ENCODE measurements at regions of chr7 and their contacts with region 1.

Region 1: GRCh38 chr7:3712841-3713240 is 411.8 kb downstream of the SDK1 start:
- DNase-seq: no peak
- ATAC-seq: no peak
- H3K4me3 ChIP-seq: no peak overlapping the region
- H3K4me3 Mint-ChIP-seq: no peak overlapping the region
- H3K27ac ChIP-seq: no peak overlapping the region
- H3K27ac Mint-ChIP-seq: no peak overlapping the region
- H3K4me1 ChIP-seq: no peaks in the 10 kb centered on the region
- H3K4me1 Mint-ChIP-seq: peaks cover 6% of the 10 kb centered on the region
- H3K27me3 ChIP-seq: no peaks in the 10 kb centered on the region
- H3K27me3 Mint-ChIP-seq: peaks cover 5% of the 10 kb centered on the region
- CTCF ChIP-seq: no peak

Region 2: DNA sequence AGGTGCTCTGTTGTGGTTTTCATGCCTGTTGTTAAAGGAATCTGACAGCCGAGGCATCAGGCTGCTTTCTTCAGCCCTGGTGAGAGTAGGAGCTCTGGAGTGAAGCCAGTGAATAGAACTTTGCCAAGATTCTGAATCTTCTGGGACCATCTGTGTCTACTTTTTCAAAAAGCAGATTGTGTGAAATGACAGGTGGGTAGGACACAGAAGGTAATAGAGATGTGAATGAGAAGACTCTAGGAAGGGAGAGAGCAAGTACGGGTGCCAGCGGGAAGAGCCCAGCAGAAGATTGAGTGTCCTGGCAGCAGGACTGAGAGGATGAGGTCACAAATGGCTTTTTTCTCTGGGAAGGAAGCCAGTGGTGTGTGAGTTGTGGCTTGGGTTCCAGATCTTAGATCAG is 17.4 kb after region 1 on chr7:
- CTCF ChIA-PET with region 1: no interaction called
- POLR2A ChIA-PET with region 1: no interaction called
- intact Hi-C with region 1: no loop called
- DNase-seq: no peak
- ATAC-seq: no peak
- H3K4me3 ChIP-seq: no peak overlapping the region
- H3K4me3 Mint-ChIP-seq: no peak overlapping the region
- H3K27ac ChIP-seq: no peak overlapping the region
- H3K27ac Mint-ChIP-seq: no peak overlapping the region
- H3K4me1 ChIP-seq: no peaks in the 10 kb centered on the region
- H3K4me1 Mint-ChIP-seq: no peaks in the 10 kb centered on the region
- H3K27me3 ChIP-seq: no peaks in the 10 kb centered on the region
- H3K27me3 Mint-ChIP-seq: peaks cover 4% of the 10 kb centered on the region
- CTCF ChIP-seq: no peak

Region 3: DNA sequence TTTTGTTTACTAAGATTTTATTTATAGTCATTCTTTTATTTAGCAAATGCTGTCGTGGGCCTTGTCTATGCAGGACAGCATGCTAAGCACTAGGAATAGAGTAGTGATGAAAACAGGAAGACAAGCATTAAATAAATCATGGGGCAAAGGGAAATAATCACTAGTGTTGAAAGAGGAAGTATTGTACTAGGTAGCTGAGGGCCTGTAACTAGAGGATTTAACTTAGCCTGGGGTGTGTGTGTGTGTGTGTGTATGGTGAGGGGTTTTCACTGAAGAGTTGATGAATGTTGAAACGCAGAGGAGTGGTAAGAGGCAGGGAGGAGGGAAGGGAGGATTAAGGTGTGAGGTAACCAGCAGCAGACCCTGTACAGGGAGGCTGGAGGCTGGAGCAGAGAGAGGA is 34.6 kb after region 1 on chr7:
- CTCF ChIA-PET with region 1: no interaction called
- POLR2A ChIA-PET with region 1: no interaction called
- intact Hi-C with region 1: loop called in 1 of 2 experiments (anchors 1 kb)
- DNase-seq: no peak
- ATAC-seq: no peak
- H3K4me3 ChIP-seq: no peak overlapping the region
- H3K4me3 Mint-ChIP-seq: no peak overlapping the region
- H3K27ac ChIP-seq: no peak overlapping the region
- H3K27ac Mint-ChIP-seq: no peak overlapping the region
- H3K4me1 ChIP-seq: no peaks in the 10 kb centered on the region
- H3K4me1 Mint-ChIP-seq: no peaks in the 10 kb centered on the region
- H3K27me3 ChIP-seq: no peaks in the 10 kb centered on the region
- H3K27me3 Mint-ChIP-seq: peaks cover 17% of the 10 kb centered on the region
- CTCF ChIP-seq: no peak

Measured in CD8-positive, alpha-beta T cell (primary cell).